GM13976 (cell line): ENCODE measurements at regions of chr2 and their contacts with region 1.

Region 1: DNA sequence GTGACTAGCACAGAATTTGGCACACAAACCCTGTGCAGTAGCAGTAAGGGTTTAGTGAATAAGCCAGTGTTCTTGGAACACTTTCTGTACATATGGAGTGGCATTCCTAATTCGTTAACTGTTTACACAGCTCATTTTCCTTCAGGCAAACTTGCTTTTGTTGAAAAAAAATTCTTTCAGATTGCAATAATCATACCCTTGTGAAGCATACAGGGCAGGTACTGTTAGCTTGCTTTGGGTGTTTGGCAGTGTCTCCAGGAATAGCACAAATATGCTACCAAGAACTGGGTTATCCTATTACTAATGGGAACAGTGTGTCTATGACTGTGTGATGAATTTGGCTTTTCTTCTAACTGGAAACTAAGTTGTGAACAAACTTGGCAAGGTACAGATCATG is 33.4 kb downstream of the UGP2 start:
- DNase-seq: no peak
- CTCF ChIP-seq: no peak

Region 2: GRCh38 chr2:63680455-63680854 is 194.7 kb before region 1 on chr2:
- in situ Hi-C with region 1: loop called (anchors 10 kb)
- DNase-seq: no peak
- CTCF ChIP-seq: no peak